H1 (cell line): ENCODE measurements at regions of chr10 and their contacts with region 1.

Region 1: DNA sequence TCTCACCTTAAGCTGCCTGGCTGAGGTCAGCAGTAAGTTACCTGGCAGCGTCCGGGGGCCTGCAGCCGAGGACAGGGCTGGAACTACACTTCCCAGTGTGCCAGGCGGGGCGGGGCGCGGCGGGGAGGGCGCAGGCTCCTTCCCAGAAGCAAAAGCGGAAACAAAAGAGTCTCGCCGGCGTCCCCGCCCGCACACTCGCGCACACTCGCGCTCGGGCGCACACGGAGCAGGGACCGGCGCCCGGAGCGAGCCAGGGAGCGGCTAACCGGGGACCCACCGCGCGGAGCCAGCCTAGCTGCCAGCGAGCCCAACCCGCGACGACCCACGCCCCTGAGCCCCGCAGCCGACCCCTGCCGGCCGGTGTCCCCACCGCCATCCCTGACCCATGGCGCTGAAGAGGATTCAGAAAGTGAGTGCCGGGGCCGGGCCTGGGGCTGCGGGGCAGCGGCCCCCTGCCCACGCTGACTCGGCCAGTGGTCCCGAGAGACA is at the start of gene UBE2D1:
- DNase-seq: peak; percentile 47 to 91
- H3K4me3 ChIP-seq: peak within 1 kb of the TSS; percentile 68 to 91 (median 82)
- H3K27ac ChIP-seq: peak within 1 kb of the TSS; percentile 35; the same call in 1 of the 2 replicates
- H3K4me1 ChIP-seq: peaks cover 0 to 3% (median 0%) of the 10 kb centered on the region in 4 experiments; a peak in 2 of 7 replicates
- H3K27me3 ChIP-seq: no peaks in the 10 kb centered on the region
- CTCF ChIP-seq: peak in 1 of 3 experiments; percentile 34; a peak in 1 of 4 replicates
- EP300 ChIP-seq: no peak
- POLR2A ChIP-seq: peak; percentile 50 to 88
- RAD21 ChIP-seq: no peak
- total RNA-seq, gene UBE2D1: 30.4 and 33.5 TPM in 2 replicates

Region 2: GRCh38 chr10:58384999-58385783 is 50.3 kb after region 1 on chr10 and contains the start of gene TFAM:
- CTCF ChIA-PET with region 1: interaction called, 5 read pairs
- POLR2A ChIA-PET with region 1: interaction called, 21 read pairs
- DNase-seq: peak; percentile 53 to 96
- H3K4me3 ChIP-seq: peak within 1 kb of the TSS; percentile 80 to 98 (median 94)
- H3K27ac ChIP-seq: peak within 1 kb of the TSS; percentile 90
- H3K4me1 ChIP-seq: peaks cover 0 to 4% (median 1%) of the 10 kb centered on the region in 4 experiments; a peak in 3 of 7 replicates
- H3K27me3 ChIP-seq: no peaks in the 10 kb centered on the region
- CTCF ChIP-seq: peak in 2 of 3 experiments; percentile 34 to 46
- EP300 ChIP-seq: peak in 1 of 2 experiments; percentile 33; a peak in 1 of 3 replicates
- POLR2A ChIP-seq: peak; percentile 92 to 98
- RAD21 ChIP-seq: peak in 1 of 2 experiments; percentile 7; a peak in 1 of 4 replicates
- total RNA-seq, gene TFAM: 97.3 and 97.5 TPM in 2 replicates

Region 3: DNA sequence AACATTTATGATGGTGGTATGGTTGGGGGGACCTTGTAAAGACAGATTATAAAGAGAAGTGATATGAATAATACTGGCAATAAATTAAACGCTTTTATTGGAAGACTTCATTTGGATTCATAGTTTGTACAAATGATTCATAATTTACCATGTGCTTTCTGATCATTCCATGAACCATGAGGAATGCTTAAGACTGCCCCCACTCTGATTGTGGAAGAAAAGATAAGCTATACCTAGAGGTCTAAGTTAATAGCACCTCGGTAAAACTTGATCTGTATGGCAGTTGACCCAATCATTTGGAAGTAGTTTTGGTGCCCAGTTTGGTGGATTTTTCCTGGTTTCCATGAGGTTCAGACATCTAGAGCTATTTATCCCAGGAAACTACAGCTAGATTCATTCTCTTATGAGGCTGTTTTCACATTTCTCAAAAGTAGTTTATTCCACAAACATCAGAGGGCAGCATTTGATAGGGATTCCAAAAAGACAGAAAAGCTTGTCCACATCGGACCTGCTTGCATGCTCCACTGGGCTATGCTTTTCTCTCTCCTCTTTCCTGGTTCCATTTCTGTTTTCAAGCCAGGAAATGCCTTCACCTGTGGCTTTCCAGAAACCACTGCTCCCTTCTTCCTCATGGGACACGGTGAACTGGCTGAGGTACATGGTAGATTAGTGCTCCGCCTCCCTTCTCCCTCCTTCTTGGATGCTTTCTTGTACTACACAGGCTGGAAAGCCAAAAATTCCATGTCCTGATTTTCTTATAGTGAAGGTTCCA is 79.6 kb after region 1 on chr10:
- CTCF ChIA-PET with region 1: no interaction called
- POLR2A ChIA-PET with region 1: no interaction called
- DNase-seq: no peak
- H3K4me3 ChIP-seq: no peak overlapping the region
- H3K27ac ChIP-seq: no peak overlapping the region
- H3K4me1 ChIP-seq: peaks cover 0 to 6% (median 0%) of the 10 kb centered on the region in 4 experiments; a peak in 2 of 7 replicates
- H3K27me3 ChIP-seq: no peaks in the 10 kb centered on the region
- CTCF ChIP-seq: peak in 2 of 3 experiments; percentile 37 to 42; a peak in 2 of 4 replicates
- EP300 ChIP-seq: no peak
- POLR2A ChIP-seq: no peak
- RAD21 ChIP-seq: peak; percentile 80 to 82

Region 4: DNA sequence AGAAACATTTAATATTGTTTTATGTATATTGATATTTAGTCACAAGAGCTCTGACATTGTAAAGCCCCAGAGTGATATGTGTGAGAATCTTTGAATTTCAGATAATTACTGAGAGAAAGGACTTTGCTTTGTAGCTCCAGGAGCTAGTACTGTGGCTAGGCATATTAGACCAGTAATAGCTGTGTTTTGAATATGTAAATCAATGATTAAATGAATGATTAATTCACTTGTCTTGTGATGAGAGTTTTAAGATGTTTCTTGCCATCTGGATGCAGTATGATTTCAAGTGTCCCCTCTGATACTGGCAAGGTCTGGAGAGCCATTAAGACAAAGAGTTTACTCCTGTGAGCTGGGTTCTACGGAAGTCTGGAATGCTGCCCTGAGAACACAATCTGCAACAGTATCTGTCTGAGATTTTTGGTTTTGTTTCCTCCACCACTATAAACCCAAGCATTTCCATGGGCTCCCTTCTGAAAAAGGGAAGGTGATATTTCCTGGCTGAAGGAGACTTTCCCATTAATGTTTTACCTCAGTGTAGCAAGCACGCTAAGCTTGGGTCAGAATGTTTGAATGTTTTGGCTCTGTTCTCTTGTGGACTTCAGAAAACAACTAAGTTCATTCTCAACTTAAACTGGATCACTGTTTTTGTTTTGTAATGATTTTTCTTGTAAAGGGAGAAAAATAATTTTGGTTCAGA is 116.5 kb after region 1 on chr10:
- CTCF ChIA-PET with region 1: no interaction called
- POLR2A ChIA-PET with region 1: no interaction called
- DNase-seq: no peak
- H3K4me3 ChIP-seq: no peak overlapping the region
- H3K27ac ChIP-seq: no peak overlapping the region
- H3K4me1 ChIP-seq: no peaks in the 10 kb centered on the region
- H3K27me3 ChIP-seq: no peaks in the 10 kb centered on the region
- CTCF ChIP-seq: no peak
- EP300 ChIP-seq: no peak
- POLR2A ChIP-seq: no peak
- RAD21 ChIP-seq: no peak